Heart left ventricle (tissue), 16 donors: ENCODE measurements at regions of chr19 and their contacts with region 1.

Region 1: DNA sequence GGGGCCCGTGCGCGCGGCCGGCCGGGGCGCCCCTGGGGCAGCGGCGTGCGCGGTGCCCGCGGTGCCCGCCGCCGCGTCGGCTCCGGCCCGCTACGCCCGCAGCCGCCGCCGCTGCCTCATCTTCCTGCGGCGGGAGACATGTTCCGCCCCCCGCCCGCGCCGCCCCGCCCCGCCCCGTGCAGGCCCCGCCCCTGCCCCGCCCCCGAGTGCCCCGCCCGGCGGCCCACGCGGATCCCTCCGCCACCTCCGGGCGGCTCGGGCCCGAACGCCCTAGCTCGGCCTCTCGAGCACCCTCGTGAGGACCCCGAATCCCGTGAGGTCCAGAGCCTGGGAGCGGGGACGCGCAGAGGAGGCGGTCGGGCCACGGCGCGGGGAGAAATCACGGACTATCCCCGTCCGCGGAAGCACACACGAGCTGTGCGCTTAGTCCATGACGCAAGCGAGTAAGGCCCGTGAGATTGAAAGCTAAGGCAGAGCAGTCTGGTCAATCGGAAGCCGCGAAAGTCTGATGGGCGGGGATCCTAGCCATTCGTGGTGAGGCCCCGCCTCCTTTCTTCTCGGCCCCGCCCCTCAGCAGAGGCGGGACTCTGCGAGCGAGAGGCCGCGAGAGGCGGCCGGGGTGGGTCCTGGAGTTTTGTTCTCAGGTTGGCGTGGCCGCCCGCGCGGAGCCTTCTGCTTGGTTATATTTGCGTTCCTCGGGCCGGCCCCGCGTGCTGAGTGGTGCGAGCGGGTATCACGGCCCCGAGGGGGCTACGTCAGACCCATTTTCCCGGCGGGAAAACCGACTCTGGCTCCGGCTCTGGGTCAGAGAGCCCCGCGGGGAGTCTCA is at the start of gene TCF3:
- DNase-seq: peak; percentile 97 to 99 (median 98)
- ATAC-seq: peak; percentile 98 to 99 (median 99)
- H3K4me3 ChIP-seq: peak within 1 kb of the TSS; percentile 71 to 99 (median 88)
- H3K27ac ChIP-seq: peak within 1 kb of the TSS; percentile 99 to 100 (median 100)
- H3K4me1 ChIP-seq: peaks cover 0 to 22% (median 12%) of the 10 kb centered on the region in 12 donors
- H3K27me3 ChIP-seq: peaks cover 0 to 1% (median 0%) of the 10 kb centered on the region in 9 donors
- CTCF ChIP-seq: no peak
- POLR2A ChIP-seq: peak in 1 of 2 donors; percentile 56
- total RNA-seq, gene TCF3: 13.2 to 38.0 (median 22.3) TPM

Region 2: GRCh38 chr19:1490311-1491113 is 162.2 kb before region 1 on chr19 and contains the start of gene PCSK4:
- intact Hi-C with region 1: loop called in 1 of 10 experiments (anchors 2 kb)
- DNase-seq: peak; percentile 99
- ATAC-seq: peak; percentile 93 to 96 (median 95)
- H3K4me3 ChIP-seq: peak within 1 kb of the TSS; percentile 35 to 77 (median 60)
- H3K27ac ChIP-seq: peak within 1 kb of the TSS in 11 of 12 donors; percentile 55 to 87 (median 78)
- H3K4me1 ChIP-seq: peaks cover 3 to 29% (median 14%) of the 10 kb centered on the region in 12 donors
- H3K27me3 ChIP-seq: peaks cover 0 to 13% (median 0%) of the 10 kb centered on the region in 9 donors
- CTCF ChIP-seq: no peak
- POLR2A ChIP-seq: no peak
- total RNA-seq, gene PCSK4: 0.31 to 1.9 (median 1.7) TPM

Region 3: DNA sequence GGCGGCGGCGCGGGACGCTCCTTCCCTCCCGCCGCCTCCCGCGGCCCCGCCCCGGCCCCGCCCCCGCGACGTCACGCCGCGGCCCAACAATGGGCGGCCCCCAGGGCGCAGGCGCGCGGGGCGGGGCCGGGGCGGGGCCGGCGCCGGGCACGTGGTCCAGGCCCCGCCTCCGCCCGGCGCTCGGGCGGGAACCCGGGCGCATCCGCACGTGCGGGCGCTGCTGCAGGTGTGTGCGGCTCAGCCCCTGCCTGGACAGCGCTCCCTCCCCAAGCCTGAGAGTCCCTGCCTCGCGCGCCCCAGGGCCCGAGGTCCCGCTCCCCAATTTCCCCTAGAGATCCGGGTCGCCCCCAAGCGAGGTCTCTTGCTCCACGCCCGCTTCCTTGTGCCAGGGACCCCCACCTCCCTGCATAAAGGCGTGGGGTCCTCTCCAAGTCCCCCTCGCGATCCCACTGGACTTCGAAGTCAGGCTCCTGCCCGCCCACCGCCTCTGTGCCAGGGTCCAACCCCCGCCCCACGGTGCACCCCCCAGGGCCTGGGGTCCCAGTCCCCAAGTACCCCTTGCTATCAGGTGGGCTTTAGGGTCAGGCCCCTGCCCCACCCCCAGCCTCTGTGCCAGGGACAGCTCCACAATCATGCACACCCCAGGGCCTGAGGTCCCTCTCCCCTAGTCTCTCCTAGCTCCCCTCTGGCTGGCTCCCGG is 84.2 kb before region 1 on chr19 and contains the start of gene MEX3D:
- intact Hi-C with region 1: loop called in 1 of 10 experiments (anchors 5 kb)
- DNase-seq: peak; percentile 66 to 88 (median 83)
- ATAC-seq: peak; percentile 41 to 84 (median 82)
- H3K4me3 ChIP-seq: peak within 1 kb of the TSS; percentile 56 to 95 (median 76)
- H3K27ac ChIP-seq: peak within 1 kb of the TSS; percentile 60 to 91 (median 79)
- H3K4me1 ChIP-seq: peaks cover 0 to 25% (median 9%) of the 10 kb centered on the region in 12 donors
- H3K27me3 ChIP-seq: peaks cover 0 to 4% (median 0%) of the 10 kb centered on the region in 9 donors
- CTCF ChIP-seq: no peak
- POLR2A ChIP-seq: no peak
- total RNA-seq, gene MEX3D: 6.1 to 18.6 (median 9.6) TPM

Region 4: DNA sequence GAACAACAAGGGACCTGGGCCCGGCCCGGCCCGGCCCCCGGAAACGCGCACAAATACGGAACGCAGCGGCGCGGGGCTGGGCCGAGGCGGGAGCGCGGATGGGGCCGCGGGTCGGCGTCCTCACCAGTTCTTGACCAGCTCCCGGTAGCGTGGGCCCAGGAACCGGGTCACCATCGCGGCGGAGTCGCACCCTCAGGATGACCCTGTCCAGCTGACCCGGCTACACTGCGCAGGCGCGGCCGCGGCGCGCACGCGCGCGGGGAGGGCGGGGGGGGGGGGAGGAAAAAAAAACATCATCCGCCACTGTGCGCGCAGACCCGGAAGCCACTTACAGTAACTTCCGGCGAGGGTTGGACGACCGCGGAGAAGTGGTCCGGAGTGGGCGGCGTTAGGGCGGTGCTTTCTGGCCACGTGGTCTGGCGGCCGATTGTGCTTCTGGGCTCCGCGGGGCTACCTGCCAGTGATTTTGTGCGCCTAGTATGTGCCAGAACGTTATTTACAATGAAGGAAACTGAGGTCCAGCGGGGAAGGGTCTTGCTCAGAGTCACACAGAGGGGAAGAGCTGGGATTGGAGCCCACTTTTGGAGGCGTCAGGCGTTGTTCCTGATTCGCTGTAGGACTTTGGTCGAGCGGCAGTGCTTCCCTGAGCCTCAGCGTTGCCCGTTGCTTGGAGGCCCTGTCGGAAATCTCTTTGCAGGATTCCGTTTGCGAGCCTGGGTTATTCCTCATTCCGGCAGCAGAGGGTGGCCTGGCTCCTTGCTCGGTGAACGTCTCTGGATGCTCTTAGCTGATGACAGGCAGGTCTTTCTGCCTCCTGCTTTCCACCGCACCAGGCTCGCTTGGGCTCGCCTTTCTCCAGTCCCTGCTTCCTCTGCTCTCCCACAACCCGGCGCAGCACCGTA is 47.2 kb before region 1 on chr19 and contains the start of gene UQCR11:
- intact Hi-C with region 1: loop called (anchors 1 to 5 kb)
- DNase-seq: peak; percentile 96 to 97 (median 97)
- ATAC-seq: peak; percentile 94 to 97 (median 96)
- H3K4me3 ChIP-seq: peak within 1 kb of the TSS; percentile 80 to 100 (median 90)
- H3K27ac ChIP-seq: peak within 1 kb of the TSS; percentile 87 to 97 (median 95)
- H3K4me1 ChIP-seq: peaks cover 0 to 45% (median 28%) of the 10 kb centered on the region in 12 donors
- H3K27me3 ChIP-seq: no peaks in the 10 kb centered on the region
- CTCF ChIP-seq: peak; percentile 35 to 75 (median 54)
- POLR2A ChIP-seq: peak in 1 of 2 donors; percentile 51
- total RNA-seq, gene UQCR11: 170 to 982 (median 690) TPM

Region 5: DNA sequence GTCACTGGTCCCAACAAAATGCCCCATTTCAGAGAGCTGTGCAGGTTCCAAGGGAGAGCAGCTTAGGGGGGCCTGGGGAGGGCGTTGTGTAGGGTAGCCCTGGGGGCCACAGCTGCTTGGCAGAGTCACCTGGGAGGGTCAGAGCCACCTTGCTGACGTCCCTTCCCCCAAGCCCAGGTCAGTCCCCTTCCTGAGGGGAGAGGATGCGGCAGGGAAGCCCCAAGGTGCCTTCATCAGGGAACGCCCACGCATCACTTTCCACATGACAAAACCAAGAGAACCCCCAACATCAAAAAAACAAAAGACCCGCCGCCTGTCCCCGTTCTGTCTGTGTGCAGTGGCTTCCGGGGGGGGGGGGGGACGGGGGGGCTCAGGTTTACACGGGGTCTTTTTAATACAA is 42.1 kb before region 1 on chr19:
- intact Hi-C with region 1: loop called (anchors 1 to 5 kb)
- DNase-seq: no peak
- ATAC-seq: no peak
- H3K4me3 ChIP-seq: no peak overlapping the region
- H3K27ac ChIP-seq: no peak overlapping the region
- H3K4me1 ChIP-seq: peaks cover 0 to 20% (median 8%) of the 10 kb centered on the region in 12 donors
- H3K27me3 ChIP-seq: no peaks in the 10 kb centered on the region
- CTCF ChIP-seq: no peak
- POLR2A ChIP-seq: no peak